HCT116 (cell line): ENCODE measurements at regions of chr11 and their contacts with region 1.

Region 1: GRCh38 chr11:4187055-4187988 is 92.7 kb downstream of the RRM1 start:
- DNase-seq: peak; percentile 29
- ATAC-seq: peak; percentile 94
- H3K4me3 ChIP-seq: peak overlapping the region; percentile 29 to 53
- H3K27ac ChIP-seq: peak overlapping the region; percentile 5; the same call in 1 of the 2 replicates
- H3K4me1 ChIP-seq: peaks cover 0 to 12% of the 10 kb centered on the region in 2 experiments; a peak in 2 of 4 replicates
- H3K27me3 ChIP-seq: no peaks in the 10 kb centered on the region
- CTCF ChIP-seq: peak; percentile 84 to 97 (median 86)
- POLR2A ChIP-seq: no peak
- RAD21 ChIP-seq: peak; percentile 96

Region 2: DNA sequence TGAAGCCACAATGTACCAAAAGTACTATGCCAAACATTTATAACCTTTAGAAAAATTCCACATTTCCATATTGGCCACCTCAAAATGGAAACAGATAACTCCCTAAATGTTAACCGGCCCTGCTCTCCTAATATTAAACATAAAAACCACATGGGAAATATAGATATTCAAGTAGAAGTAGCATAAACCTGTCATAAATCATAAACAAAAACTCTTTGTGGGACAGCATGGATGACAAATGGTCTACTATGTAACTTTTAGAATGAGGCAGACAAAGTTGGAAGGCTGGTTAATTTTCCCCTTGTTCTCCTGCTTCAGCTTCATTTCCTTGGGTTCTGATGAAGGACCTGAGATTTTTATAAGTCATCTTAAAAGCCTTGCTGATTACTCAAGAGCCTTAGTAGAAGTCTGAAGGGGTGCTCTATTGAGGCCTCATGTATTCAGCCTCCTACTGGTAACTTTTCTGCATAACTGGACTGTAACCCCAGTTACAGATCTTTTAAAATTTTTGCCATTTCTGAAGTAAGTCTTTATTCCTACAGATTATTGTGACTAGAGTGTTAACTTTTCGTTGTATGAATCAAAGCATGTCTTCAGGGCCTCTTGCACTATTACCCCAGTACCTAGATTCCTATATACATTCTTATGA is 215.4 kb before region 1 on chr11:
- CTCF ChIA-PET with region 1: no interaction called
- POLR2A ChIA-PET with region 1: no interaction called
- RAD21 ChIA-PET with region 1: no interaction called
- intact Hi-C with region 1: no loop called
- DNase-seq: no peak
- ATAC-seq: no peak
- H3K4me3 ChIP-seq: no peak overlapping the region
- H3K27ac ChIP-seq: no peak overlapping the region
- H3K4me1 ChIP-seq: no peaks in the 10 kb centered on the region
- H3K27me3 ChIP-seq: no peaks in the 10 kb centered on the region
- CTCF ChIP-seq: no peak
- POLR2A ChIP-seq: no peak
- RAD21 ChIP-seq: no peak

Region 3: GRCh38 chr11:4496557-4497275 is 309.4 kb after region 1 on chr11:
- CTCF ChIA-PET with region 1: interaction called, 62 read pairs
- POLR2A ChIA-PET with region 1: interaction called, 4 read pairs
- RAD21 ChIA-PET with region 1: interaction called, 3 to 6 read pairs
- intact Hi-C with region 1: loop called (anchors 1 kb)
- DNase-seq: no peak
- ATAC-seq: no peak
- H3K4me3 ChIP-seq: no peak overlapping the region
- H3K27ac ChIP-seq: no peak overlapping the region
- H3K4me1 ChIP-seq: no peaks in the 10 kb centered on the region
- H3K27me3 ChIP-seq: peaks cover 63% of the 10 kb centered on the region
- CTCF ChIP-seq: no peak
- POLR2A ChIP-seq: no peak
- RAD21 ChIP-seq: no peak

Region 4: DNA sequence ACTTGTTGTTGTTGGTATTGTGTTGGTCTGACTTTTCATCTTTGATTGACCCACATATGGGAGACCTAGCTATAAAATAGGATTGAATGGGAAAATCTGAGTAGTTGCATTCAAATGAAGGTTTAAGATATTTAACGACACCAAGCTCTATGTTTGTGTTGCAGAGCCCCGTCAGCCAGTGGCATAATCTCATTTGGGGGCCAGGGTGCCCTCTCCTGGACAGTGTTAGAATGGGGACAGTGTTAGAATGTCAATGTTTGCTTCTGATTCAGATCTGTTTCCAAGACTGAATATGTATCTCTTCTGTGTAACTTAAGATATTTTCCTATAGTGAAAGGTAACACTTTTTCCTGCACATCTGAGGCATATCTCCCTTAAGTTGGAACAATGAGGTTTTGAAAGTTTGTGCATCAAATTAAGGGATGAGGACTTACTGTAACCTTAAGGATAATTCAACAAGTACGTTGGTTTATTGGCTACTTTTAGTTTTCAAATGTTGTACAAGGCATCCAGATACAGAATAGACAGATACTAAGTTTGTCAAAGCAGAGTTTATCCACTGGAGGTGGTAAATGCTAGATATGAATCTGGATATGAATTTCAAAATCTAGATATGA is 352.4 kb after region 1 on chr11:
- CTCF ChIA-PET with region 1: interaction called, 84 read pairs
- POLR2A ChIA-PET with region 1: no interaction called
- RAD21 ChIA-PET with region 1: interaction called, 6 to 9 read pairs
- intact Hi-C with region 1: loop called (anchors 1 kb)
- DNase-seq: no peak
- ATAC-seq: peak; percentile 90
- H3K4me3 ChIP-seq: no peak overlapping the region
- H3K27ac ChIP-seq: no peak overlapping the region
- H3K4me1 ChIP-seq: peaks cover 0 to 6% of the 10 kb centered on the region in 2 experiments; a peak in 1 of 4 replicates
- H3K27me3 ChIP-seq: peaks cover 24% of the 10 kb centered on the region; the same call in 1 of the 2 replicates
- CTCF ChIP-seq: peak; percentile 72 to 86 (median 85); a peak in 5 of 6 replicates
- POLR2A ChIP-seq: no peak
- RAD21 ChIP-seq: peak; percentile 51

Region 5: GRCh38 chr11:4551346-4551979 is 364.1 kb after region 1 on chr11:
- CTCF ChIA-PET with region 1: interaction called, 16 read pairs
- POLR2A ChIA-PET with region 1: no interaction called
- RAD21 ChIA-PET with region 1: no interaction called
- intact Hi-C with region 1: no loop called
- DNase-seq: no peak
- ATAC-seq: peak; percentile 79
- H3K4me3 ChIP-seq: no peak overlapping the region
- H3K27ac ChIP-seq: no peak overlapping the region
- H3K4me1 ChIP-seq: no peaks in the 10 kb centered on the region
- H3K27me3 ChIP-seq: peaks cover 45% of the 10 kb centered on the region
- CTCF ChIP-seq: peak; percentile 36 to 64 (median 64); a peak in 5 of 6 replicates
- POLR2A ChIP-seq: no peak
- RAD21 ChIP-seq: peak; percentile 39

Region 6: DNA sequence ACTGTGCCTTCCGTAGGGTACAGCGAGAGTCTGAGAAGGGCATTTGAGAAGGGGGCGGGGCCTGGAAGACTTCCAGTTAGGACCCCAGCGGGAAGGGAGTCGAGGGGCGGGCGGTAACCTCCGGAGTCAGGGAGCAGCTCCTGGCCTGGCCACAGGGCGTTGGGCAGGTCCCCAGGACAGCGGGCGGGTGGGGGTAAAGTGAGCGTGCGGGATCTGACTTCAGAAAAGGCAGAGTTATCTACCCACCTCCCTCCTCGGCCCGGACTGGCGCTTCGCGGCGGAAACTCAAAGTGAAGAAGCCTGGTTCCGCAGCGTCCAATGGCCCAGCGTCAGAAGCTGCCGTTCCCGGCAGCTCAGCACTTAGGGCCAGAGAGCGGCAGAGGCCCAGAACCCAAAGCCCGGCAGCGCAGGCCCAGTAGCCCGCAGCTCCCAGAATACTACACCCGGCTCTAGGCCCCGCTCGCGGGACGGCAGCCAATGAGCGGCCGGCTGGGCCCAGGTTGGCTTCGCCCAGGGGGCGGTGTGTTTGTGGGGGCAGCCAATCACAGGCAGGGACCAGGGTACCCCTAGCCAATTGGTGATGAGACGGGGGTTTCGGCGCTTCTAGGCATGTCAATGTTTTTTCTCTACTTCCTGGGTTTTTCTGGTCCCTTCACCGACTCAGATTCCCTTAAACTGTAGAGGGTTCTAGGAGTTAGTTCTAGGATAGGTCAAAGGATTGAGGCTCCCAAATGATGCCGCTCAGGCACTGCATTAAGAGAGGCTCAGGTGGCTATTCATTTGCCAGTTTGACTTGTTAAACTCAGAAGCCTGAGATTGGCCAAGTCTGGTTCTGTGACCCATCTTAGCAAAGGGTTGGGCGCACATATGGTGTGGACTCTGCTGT is 420.7 kb after region 1 on chr11 and contains the start of gene TRIM68:
- CTCF ChIA-PET with region 1: interaction called, 13 read pairs
- POLR2A ChIA-PET with region 1: no interaction called
- RAD21 ChIA-PET with region 1: no interaction called
- intact Hi-C with region 1: loop called (anchors 1 kb)
- DNase-seq: peak; percentile 89
- ATAC-seq: peak; percentile 99
- H3K4me3 ChIP-seq: peak within 1 kb of the TSS; percentile 67 to 80
- H3K27ac ChIP-seq: peak within 1 kb of the TSS; percentile 56
- H3K4me1 ChIP-seq: peaks cover 0 to 15% of the 10 kb centered on the region in 2 experiments; a peak in 2 of 4 replicates
- H3K27me3 ChIP-seq: no peaks in the 10 kb centered on the region
- CTCF ChIP-seq: no peak
- POLR2A ChIP-seq: peak; percentile 71
- RAD21 ChIP-seq: no peak
- total RNA-seq, gene TRIM68: 8.3 TPM

Region 7: GRCh38 chr11:5004424-5005274 is 817.3 kb after region 1 on chr11:
- CTCF ChIA-PET with region 1: no interaction called
- POLR2A ChIA-PET with region 1: no interaction called
- RAD21 ChIA-PET with region 1: no interaction called
- intact Hi-C with region 1: loop called (anchors 2 kb)
- DNase-seq: peak; percentile 36
- ATAC-seq: peak; percentile 71
- H3K4me3 ChIP-seq: no peak overlapping the region
- H3K27ac ChIP-seq: no peak overlapping the region
- H3K4me1 ChIP-seq: no peaks in the 10 kb centered on the region
- H3K27me3 ChIP-seq: peaks cover 33% of the 10 kb centered on the region
- CTCF ChIP-seq: peak; percentile 56 to 73 (median 64); a peak in 5 of 6 replicates
- POLR2A ChIP-seq: no peak
- RAD21 ChIP-seq: peak; percentile 74